ENCODE measurements at regions of chr11 and their contacts with region 1.

Region 1: GRCh38 chr11:107689317-107690202 is 22.3 kb downstream of the SLN start:
- DNase-seq: peak; percentile 51
- ATAC-seq: peak; percentile 90
- H3K4me3 ChIP-seq: no peak overlapping the region
- H3K27ac ChIP-seq: no peak overlapping the region
- H3K4me1 ChIP-seq: peaks cover 4% of the 10 kb centered on the region; the same call in 1 of the 2 replicates
- H3K27me3 ChIP-seq: no peaks in the 10 kb centered on the region
- CTCF ChIP-seq: peak; percentile 85
- POLR2A ChIP-seq: 0 out of 2 replicates have a peak, but pooled peaks have one; percentile 18
- RAD21 ChIP-seq: peak; percentile 89

Region 2: GRCh38 chr11:107565219-107565937 is 124.2 kb before region 1 on chr11 and contains the start of gene ALKBH8:
- CTCF ChIA-PET with region 1: interaction called, 13 read pairs
- POLR2A ChIA-PET with region 1: no interaction called
- dilution Hi-C with region 1: no loop called
- in situ Hi-C with region 1: loop called (anchors 5 kb)
- intact Hi-C with region 1: loop called (anchors 1 kb)
- DNase-seq: peak; percentile 58
- ATAC-seq: peak; percentile 92
- H3K4me3 ChIP-seq: peak within 1 kb of the TSS; percentile 85
- H3K27ac ChIP-seq: peak within 1 kb of the TSS; percentile 84
- H3K4me1 ChIP-seq: peaks cover 7% of the 10 kb centered on the region
- H3K27me3 ChIP-seq: no peaks in the 10 kb centered on the region
- CTCF ChIP-seq: no peak
- POLR2A ChIP-seq: no peak
- RAD21 ChIP-seq: no peak
- total RNA-seq, gene ALKBH8: 6.6 and 12.5 TPM in 2 replicates

Region 3: GRCh38 chr11:107573438-107573837 is 116.1 kb before region 1 on chr11:
- CTCF ChIA-PET with region 1: interaction called, 15 read pairs
- POLR2A ChIA-PET with region 1: no interaction called
- dilution Hi-C with region 1: no loop called
- in situ Hi-C with region 1: loop called (anchors 5 kb)
- intact Hi-C with region 1: loop called (anchors 1 kb)
- DNase-seq: no peak
- ATAC-seq: no peak
- H3K4me3 ChIP-seq: no peak overlapping the region
- H3K27ac ChIP-seq: no peak overlapping the region
- H3K4me1 ChIP-seq: no peaks in the 10 kb centered on the region
- H3K27me3 ChIP-seq: peaks cover 4% of the 10 kb centered on the region
- CTCF ChIP-seq: no peak
- POLR2A ChIP-seq: no peak
- RAD21 ChIP-seq: no peak

Region 4: DNA sequence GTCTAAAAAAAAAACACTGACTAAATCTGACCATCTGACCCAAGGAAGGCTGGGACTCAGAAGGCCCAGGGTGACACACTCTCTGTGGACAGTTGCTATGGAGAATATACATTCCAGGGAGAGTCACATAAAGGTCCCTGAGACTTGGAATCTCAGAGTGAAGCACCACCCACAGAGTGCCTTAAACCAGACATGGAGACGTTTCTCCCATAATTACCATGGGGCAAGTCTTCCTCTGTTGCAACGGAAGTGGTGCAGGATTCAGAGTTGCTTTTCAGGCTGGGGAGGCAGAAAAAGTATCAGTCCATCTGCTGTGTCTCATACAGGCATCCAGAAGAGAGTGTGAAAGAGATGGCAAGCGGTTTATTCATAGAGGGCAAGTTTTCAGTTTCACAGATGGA is 81.0 kb after region 1 on chr11:
- CTCF ChIA-PET with region 1: interaction called, 5 read pairs
- POLR2A ChIA-PET with region 1: no interaction called
- dilution Hi-C with region 1: no loop called
- in situ Hi-C with region 1: no loop called
- intact Hi-C with region 1: loop called (anchors 2 kb)
- DNase-seq: peak; percentile 19
- ATAC-seq: peak; percentile 30
- H3K4me3 ChIP-seq: no peak overlapping the region
- H3K27ac ChIP-seq: no peak overlapping the region
- H3K4me1 ChIP-seq: peaks cover 4% of the 10 kb centered on the region
- H3K27me3 ChIP-seq: no peaks in the 10 kb centered on the region
- CTCF ChIP-seq: no peak
- POLR2A ChIP-seq: no peak
- RAD21 ChIP-seq: no peak

Region 5: GRCh38 chr11:107898270-107898669 is 208.7 kb after region 1 on chr11:
- CTCF ChIA-PET with region 1: no interaction called
- POLR2A ChIA-PET with region 1: no interaction called
- dilution Hi-C with region 1: no loop called
- in situ Hi-C with region 1: no loop called
- intact Hi-C with region 1: loop called (anchors 10 kb)
- DNase-seq: peak; percentile 63
- ATAC-seq: peak; percentile 91
- H3K4me3 ChIP-seq: no peak overlapping the region
- H3K27ac ChIP-seq: no peak overlapping the region
- H3K4me1 ChIP-seq: no peaks in the 10 kb centered on the region
- H3K27me3 ChIP-seq: 0 out of 2 replicates have a peak, but pooled peaks cover 2% of the 10 kb centered on the region
- CTCF ChIP-seq: peak; percentile 71
- POLR2A ChIP-seq: no peak
- RAD21 ChIP-seq: peak; percentile 74